Activated CD4-positive, alpha-beta memory T cell treated with anti-CD3 and anti-CD28 coated beads for 36 hours (primary cell): ENCODE measurements at regions of chr9 and their contacts with region 1.

Region 1: GRCh38 chr9:111483862-111484571 is at the start of gene ECPAS:
- DNase-seq: peak; percentile 80
- H3K4me3 Mint-ChIP-seq: peak within 1 kb of the TSS; percentile 85
- H3K27ac Mint-ChIP-seq: peak within 1 kb of the TSS; percentile 87
- H3K4me1 Mint-ChIP-seq: peaks cover 30% of the 10 kb centered on the region
- H3K27me3 Mint-ChIP-seq: no peaks in the 10 kb centered on the region
- total RNA-seq, gene ECPAS: 66.5 to 67.0 TPM

Region 2: DNA sequence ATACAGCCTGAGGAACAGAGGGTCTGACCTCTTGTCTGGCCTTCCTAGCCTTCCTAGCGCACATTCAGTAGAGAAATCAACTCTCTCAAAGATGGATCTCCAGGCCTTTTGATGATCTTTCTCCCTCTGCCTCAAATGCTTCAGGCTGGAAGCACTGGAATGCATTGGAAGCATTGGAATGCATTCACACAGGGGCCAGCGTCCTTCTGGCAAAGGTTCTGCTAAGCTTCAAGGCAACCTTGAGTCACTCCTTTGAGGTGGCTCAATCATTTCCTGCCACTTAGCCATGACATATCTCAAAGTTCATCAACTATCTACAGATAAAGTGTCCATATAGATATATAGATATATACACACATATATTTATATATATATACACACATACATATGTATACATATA is 196.9 kb before region 1 on chr9:
- CTCF ChIA-PET with region 1: no interaction called
- POLR2A ChIA-PET with region 1: no interaction called
- intact Hi-C with region 1: loop called (anchors 5 kb)
- DNase-seq: no peak
- H3K4me3 Mint-ChIP-seq: no peak overlapping the region
- H3K27ac Mint-ChIP-seq: no peak overlapping the region
- H3K4me1 Mint-ChIP-seq: peaks cover 11% of the 10 kb centered on the region
- H3K27me3 Mint-ChIP-seq: peaks cover 10% of the 10 kb centered on the region

Region 3: GRCh38 chr9:111427186-111427585 is 56.8 kb before region 1 on chr9:
- CTCF ChIA-PET with region 1: interaction called, 3 read pairs
- POLR2A ChIA-PET with region 1: no interaction called
- intact Hi-C with region 1: loop called (anchors 1 kb)
- DNase-seq: no peak
- H3K4me3 Mint-ChIP-seq: no peak overlapping the region
- H3K27ac Mint-ChIP-seq: no peak overlapping the region
- H3K4me1 Mint-ChIP-seq: peaks cover 10% of the 10 kb centered on the region
- H3K27me3 Mint-ChIP-seq: no peaks in the 10 kb centered on the region

Region 4: DNA sequence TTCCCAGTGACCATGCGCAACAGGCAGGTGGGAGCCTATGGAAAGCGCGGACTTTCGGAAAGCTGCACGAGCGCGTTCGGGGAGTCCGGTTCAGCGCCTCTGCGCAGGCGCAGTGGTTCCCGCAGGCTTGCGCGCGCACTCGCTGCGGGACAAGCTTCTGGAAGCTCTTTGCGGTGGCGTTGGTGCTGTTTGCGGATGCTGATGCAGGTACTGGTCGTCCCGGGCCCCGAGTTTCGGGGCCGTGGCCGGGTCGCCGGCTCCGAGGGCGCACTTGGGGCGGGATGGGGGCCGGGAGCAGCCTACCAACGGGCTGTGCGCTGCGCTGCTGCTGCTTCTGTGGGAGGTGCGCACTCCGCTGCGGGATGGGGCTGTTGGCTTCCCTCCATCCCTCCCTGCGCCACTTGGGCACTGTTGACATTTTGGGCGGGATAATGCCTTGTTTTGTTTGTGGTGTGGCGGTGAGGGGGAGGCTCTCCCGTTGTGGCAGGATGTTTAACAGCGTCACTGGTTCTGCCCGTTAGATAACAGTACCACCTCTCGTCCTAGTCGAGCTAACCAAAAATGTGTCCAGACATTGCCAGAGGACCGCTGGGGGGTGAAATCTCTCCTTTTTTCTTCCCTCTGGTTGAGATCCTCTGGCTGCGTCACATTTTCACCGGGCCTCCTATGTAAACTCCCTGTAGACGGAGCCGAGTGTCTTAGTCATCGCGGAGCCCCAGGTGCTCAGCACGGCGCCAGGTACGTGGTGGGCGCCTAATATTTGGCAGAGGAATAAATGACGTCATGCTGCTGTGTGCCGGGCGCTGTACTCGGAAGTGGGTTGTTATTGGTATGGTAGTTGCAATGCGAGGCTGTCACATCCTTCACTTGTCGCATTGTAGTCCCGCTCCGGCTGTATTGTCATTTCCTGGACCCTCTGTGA is 41.3 kb after region 1 on chr9 and contains the start of gene ZNF483:
- CTCF ChIA-PET with region 1: no interaction called
- POLR2A ChIA-PET with region 1: interaction called, 3 read pairs
- intact Hi-C with region 1: loop called (anchors 1 kb)
- DNase-seq: peak; percentile 73
- H3K4me3 Mint-ChIP-seq: peak within 1 kb of the TSS; percentile 88
- H3K27ac Mint-ChIP-seq: peak within 1 kb of the TSS; percentile 72
- H3K4me1 Mint-ChIP-seq: peaks cover 13% of the 10 kb centered on the region
- H3K27me3 Mint-ChIP-seq: no peaks in the 10 kb centered on the region
- total RNA-seq, gene ZNF483: 2.9 to 3.4 TPM

Region 5: DNA sequence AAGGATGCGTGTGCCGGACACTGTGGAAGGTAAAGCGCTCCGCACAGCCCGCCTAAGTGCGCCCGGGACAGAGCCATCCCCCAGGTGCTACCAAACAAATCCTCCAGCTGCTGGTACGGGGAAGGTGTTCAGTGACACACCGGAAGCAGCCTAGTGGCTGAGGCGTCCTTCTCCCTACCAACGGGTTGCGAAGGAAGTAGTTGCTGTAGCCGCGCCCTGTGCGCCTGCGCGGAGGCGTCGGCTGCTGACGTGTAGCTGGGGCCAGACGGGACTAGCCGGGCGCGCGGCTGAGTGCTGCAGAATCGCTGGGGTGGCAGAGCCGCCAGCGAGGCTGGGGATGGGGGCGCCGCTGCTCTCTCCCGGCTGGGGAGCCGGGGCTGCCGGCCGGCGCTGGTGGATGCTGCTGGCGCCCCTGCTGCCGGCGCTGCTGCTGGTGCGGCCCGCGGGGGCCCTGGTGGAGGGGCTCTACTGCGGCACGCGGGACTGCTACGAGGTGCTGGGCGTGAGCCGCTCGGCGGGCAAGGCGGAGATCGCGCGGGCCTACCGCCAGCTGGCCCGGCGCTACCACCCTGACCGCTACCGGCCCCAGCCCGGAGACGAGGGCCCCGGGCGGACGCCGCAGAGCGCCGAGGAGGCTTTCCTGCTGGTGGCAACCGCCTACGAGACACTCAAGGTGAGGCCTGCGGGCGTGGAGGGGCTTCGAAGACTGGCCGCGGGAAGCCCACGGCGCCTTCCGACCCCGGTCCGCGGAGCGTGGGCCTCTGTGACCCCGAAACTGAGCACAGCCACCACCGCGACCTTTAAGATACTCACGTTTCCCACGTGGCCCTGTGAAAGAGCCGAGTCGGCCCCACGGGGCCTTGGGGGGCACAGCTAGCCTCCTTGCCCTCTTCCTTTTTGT is 147.3 kb after region 1 on chr9 and contains the start of gene DNAJC25:
- CTCF ChIA-PET with region 1: no interaction called
- POLR2A ChIA-PET with region 1: interaction called, 7 read pairs
- intact Hi-C with region 1: loop called (anchors 1 kb)
- DNase-seq: peak; percentile 98
- H3K4me3 Mint-ChIP-seq: peak within 1 kb of the TSS; percentile 90
- H3K27ac Mint-ChIP-seq: peak within 1 kb of the TSS; percentile 74
- H3K4me1 Mint-ChIP-seq: peaks cover 43% of the 10 kb centered on the region
- H3K27me3 Mint-ChIP-seq: no peaks in the 10 kb centered on the region
- total RNA-seq, gene DNAJC25: 4.2 to 4.5 TPM

Region 6: DNA sequence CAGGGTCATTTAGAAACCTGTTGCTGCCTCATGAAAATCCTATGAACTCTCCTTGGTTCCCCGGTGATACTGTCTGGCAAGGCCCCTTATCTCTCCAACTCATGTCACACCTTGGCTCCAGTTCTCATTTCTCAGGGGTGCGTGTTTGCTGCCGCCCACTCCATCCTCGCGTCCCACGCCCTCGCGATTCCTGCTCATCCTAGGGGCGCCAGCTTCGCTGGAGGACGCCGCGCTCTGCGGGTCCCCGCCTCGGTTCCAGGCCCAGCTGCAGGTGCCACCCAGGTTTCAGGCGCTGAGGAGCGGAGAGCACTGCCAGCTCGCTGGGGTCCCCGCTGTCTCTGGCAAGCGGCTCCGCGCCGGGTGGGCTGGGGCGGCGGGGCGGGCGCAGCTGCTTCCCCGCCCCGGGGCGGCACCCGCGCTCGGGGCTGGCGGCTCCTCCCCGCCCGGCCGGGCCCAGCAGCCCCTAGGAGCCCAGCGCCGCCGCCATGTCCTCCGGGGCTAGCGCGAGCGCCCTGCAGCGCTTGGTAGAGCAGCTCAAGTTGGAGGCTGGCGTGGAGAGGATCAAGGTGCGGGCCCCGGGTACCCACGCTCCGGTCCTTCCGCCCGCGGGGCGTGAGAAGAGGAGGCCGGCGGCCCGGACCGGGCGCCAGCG is 177.3 kb after region 1 on chr9 and contains the start of gene GNG10:
- CTCF ChIA-PET with region 1: no interaction called
- POLR2A ChIA-PET with region 1: no interaction called
- intact Hi-C with region 1: loop called (anchors 2 kb)
- DNase-seq: peak; percentile 75
- H3K4me3 Mint-ChIP-seq: peak within 1 kb of the TSS; percentile 95
- H3K27ac Mint-ChIP-seq: peak within 1 kb of the TSS; percentile 92
- H3K4me1 Mint-ChIP-seq: peaks cover 27% of the 10 kb centered on the region
- H3K27me3 Mint-ChIP-seq: no peaks in the 10 kb centered on the region
- total RNA-seq, gene GNG10: 21.7 to 22.1 TPM